H1 (cell line): ENCODE measurements at regions of chr9 and their contacts with region 1.

Region 1: DNA sequence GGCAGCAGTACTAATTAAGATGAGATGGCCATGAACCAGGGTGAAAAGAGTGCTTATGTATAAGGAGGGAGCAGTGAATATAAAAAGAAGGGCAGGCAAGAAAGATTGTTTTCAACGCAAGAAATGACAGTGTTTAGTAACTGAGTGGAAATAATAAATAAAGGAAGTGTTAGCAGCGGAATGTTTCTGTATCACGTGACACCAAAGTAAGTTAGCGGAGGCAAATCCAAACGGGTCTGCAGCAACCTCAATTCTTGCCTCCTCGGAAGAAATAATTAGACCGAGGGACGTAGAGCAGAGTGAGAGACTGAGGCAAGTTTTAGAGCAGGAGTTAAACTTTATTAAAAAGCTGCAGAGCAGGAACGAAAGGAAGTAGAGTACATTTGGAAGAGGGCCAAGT is 15.4 kb upstream of the GAS1 start:
- DNase-seq: no peak
- H3K4me3 ChIP-seq: no peak overlapping the region
- H3K27ac ChIP-seq: no peak overlapping the region
- H3K4me1 ChIP-seq: no peaks in the 10 kb centered on the region
- H3K27me3 ChIP-seq: no peaks in the 10 kb centered on the region; a peak in 1 of 7 replicates
- CTCF ChIP-seq: no peak
- EP300 ChIP-seq: no peak
- POLR2A ChIP-seq: no peak
- RAD21 ChIP-seq: no peak

Region 2: DNA sequence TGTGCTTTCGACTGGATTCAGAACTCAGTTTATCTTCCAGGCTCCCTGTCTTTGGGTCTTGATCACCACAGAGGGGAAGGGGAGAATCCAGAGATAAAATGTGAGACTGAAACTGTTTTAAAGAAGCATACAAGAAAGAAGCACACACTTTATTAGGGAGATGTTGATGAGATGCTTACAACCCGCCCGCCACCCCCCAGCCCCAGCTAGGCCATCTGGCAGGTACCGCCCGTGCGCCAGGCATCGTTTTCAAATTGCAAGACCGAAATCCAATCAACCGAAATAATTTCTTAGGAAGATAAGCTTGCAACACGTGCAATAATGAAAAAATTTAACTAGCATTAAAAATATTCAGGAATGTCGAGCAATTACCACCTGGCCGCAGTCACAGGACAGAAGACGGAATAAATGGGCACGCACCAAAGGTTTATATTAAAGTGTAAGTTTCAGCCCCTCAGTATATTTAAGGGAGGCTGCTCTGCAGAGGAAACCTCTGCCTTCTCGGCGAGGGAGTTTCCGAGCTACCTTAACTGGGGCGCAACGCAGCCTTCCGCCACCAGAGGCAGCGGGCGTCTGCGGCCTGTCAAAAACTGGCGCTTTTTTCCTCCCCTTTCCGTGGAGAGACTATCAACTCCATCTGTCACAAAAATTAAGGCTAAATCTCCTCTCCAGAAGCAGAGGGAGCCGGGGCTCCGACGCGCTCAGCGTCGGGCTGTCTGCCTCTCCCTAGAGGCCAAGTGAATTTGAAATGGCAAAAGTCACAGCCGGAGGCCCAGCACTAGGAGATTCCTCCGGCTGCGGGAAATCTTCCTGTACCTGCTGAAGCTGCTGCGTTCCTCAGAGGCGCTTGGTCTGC is 14.4 kb before region 1 on chr9:
- CTCF ChIA-PET with region 1: interaction called, 20 read pairs
- POLR2A ChIA-PET with region 1: interaction called, 4 read pairs
- DNase-seq: peak in 1 of 2 experiments; percentile 82
- H3K4me3 ChIP-seq: peak overlapping the region; percentile 33 to 82 (median 62)
- H3K27ac ChIP-seq: no peak overlapping the region
- H3K4me1 ChIP-seq: peaks cover 2 to 17% (median 4%) of the 10 kb centered on the region in 4 experiments; a peak in 6 of 7 replicates
- H3K27me3 ChIP-seq: peaks cover 0 to 32% (median 14%) of the 10 kb centered on the region in 4 experiments; a peak in 5 of 7 replicates
- CTCF ChIP-seq: peak; percentile 68 to 80 (median 79)
- EP300 ChIP-seq: no peak
- POLR2A ChIP-seq: no peak
- RAD21 ChIP-seq: peak; percentile 61 to 70